ENCODE measurements at regions of chr1 and their contacts with region 1.

Region 1: DNA sequence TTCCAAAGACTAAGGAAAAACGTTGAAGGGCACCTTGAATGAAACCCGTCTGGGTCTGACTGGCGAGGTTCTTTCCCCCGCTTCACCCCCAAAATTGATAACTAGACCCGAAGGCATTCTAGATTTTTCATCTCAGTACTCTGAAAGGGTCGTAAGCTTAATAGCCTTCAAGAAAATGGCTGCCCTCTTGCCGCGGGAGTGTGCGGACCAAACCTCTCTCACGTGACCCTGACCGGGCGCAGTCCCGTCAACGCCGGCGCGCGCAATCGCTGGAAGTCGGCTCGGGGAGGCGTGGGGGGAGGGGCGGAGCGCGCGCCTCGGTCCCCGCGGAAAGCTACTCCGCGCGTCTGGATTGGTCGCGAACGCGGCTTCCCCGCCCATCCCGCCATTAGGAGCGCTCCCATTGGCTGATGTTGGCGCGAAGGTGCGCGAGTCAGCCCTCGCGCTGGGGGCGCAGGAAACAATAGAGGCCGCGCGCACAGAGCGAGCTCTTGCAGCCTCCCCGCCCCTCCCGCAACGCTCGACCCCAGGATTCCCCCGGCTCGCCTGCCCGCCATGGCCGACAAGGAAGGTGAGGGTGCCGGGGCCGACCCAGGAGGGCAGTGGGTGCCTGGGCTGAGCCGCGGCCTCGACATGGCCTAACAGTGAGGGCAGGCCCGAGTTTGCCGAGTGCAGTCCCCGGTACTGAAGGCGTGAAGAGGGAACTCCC is at the start of gene RBBP4:
- DNase-seq: peak; percentile 99
- ATAC-seq: peak; percentile 89
- H3K4me3 Mint-ChIP-seq: peak within 1 kb of the TSS; percentile 90
- H3K27ac Mint-ChIP-seq: peak within 1 kb of the TSS; percentile 99
- H3K4me1 Mint-ChIP-seq: peaks cover 48% of the 10 kb centered on the region
- H3K27me3 Mint-ChIP-seq: no peaks in the 10 kb centered on the region
- total RNA-seq, gene RBBP4: 323 to 331 TPM

Region 2: GRCh38 chr1:32107742-32108661 is 542.9 kb before region 1 on chr1 and contains the start of gene KPNA6:
- CTCF ChIA-PET with region 1: no interaction called
- POLR2A ChIA-PET with region 1: interaction called, 3 read pairs
- intact Hi-C with region 1: loop called in 1 of 2 experiments (anchors 1 kb)
- DNase-seq: peak; percentile 94
- ATAC-seq: peak; percentile 77
- H3K4me3 Mint-ChIP-seq: peak within 1 kb of the TSS; percentile 88
- H3K27ac Mint-ChIP-seq: peak within 1 kb of the TSS; percentile 96
- H3K4me1 Mint-ChIP-seq: peaks cover 39% of the 10 kb centered on the region
- H3K27me3 Mint-ChIP-seq: no peaks in the 10 kb centered on the region
- total RNA-seq, gene KPNA6: 70.0 to 78.3 TPM

Region 3: GRCh38 chr1:32351399-32352238 is 299.3 kb before region 1 on chr1:
- CTCF ChIA-PET with region 1: no interaction called
- POLR2A ChIA-PET with region 1: no interaction called
- intact Hi-C with region 1: loop called in 1 of 2 experiments (anchors 1 kb)
- DNase-seq: peak; percentile 96
- ATAC-seq: peak; percentile 96
- H3K4me3 Mint-ChIP-seq: peak overlapping the region; percentile 73
- H3K27ac Mint-ChIP-seq: peak overlapping the region; percentile 82
- H3K4me1 Mint-ChIP-seq: peaks cover 20% of the 10 kb centered on the region
- H3K27me3 Mint-ChIP-seq: no peaks in the 10 kb centered on the region

Region 4: DNA sequence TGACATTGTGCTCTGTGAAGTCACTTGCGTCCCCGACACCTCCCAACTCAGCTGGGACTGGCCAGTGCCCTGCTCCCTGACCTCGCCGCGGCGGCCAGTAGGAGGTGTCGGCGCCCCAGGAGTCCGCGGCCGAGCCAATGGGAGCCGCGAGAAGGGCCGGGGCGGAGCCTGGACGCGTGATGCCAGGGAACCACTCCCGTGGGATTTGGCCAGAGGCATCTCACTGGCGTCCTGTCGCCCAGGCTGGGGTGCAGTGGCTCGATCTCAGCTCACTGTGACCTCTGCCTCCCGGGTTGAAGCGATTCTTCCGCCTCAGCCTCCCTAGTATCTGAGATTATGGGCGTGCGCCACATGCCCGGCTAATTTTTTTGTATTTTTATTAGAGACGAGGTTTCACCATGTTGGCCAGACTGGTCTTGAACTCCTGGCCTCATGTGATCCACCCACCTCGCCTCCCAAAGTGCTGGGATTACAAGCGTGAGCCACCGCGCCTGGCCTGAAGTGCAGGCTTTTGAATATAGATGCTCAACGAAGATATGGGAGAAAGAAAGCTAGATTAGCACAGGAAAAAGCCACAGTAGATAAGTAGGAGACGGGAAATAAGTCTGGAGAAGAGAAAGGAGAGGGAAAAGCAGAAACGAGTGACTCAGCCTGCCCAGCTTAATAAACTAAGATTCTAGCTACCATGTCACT is 38.6 kb before region 1 on chr1:
- CTCF ChIA-PET with region 1: no interaction called
- POLR2A ChIA-PET with region 1: interaction called, 6 read pairs
- intact Hi-C with region 1: loop called in 1 of 2 experiments (anchors 1 kb)
- DNase-seq: peak; percentile 75
- ATAC-seq: peak; percentile 99
- H3K4me3 Mint-ChIP-seq: peak overlapping the region; percentile 57
- H3K27ac Mint-ChIP-seq: no peak overlapping the region
- H3K4me1 Mint-ChIP-seq: peaks cover 7% of the 10 kb centered on the region
- H3K27me3 Mint-ChIP-seq: no peaks in the 10 kb centered on the region

Region 5: GRCh38 chr1:32933742-32934322 is 282.9 kb after region 1 on chr1:
- CTCF ChIA-PET with region 1: no interaction called
- POLR2A ChIA-PET with region 1: no interaction called
- intact Hi-C with region 1: no loop called
- DNase-seq: no peak
- ATAC-seq: no peak
- H3K4me3 Mint-ChIP-seq: no peak overlapping the region
- H3K27ac Mint-ChIP-seq: no peak overlapping the region
- H3K4me1 Mint-ChIP-seq: peaks cover 12% of the 10 kb centered on the region
- H3K27me3 Mint-ChIP-seq: no peaks in the 10 kb centered on the region

Region 6: DNA sequence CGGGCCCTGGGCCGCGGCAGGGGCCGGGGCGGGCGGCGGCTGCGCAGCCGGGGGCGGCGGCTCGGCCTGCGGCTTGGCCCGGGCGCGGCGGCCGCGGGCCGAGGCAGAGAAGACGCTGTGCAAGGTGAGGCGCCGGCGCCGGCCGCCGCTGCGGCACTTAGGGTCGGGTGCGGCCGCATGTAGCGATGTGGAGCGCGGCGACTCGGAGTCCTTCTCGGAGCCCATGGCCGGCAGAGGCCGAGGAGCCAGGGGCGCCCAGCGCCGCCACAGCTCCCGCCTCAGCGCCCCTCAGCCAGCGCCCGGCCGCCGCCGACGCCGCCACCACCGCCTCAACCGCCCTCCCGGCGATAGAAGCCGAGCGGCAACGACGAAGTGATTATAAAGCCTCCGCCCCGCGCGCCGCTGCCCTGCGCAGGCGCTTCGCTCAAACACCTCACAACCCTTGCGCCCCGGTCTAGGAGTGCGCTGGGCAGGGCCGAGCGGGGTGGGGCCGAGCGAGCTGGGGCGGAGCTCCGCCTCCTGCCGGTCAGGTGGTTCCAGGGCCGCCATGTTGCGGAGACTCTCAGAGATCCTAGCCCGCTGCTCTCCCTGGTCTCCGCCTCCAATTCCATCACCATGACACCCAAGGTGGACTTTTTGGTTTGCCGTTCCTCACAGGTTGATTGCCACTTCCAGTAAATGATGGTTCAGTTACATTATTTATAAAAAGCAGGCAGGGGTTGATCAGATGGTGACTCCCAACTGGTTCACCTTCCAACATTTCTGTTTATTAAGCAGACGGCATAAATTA is 313.8 kb after region 1 on chr1 and contains the start of gene RNF19B:
- CTCF ChIA-PET with region 1: no interaction called
- POLR2A ChIA-PET with region 1: no interaction called
- intact Hi-C with region 1: loop called in 1 of 2 experiments (anchors 1 kb)
- DNase-seq: peak; percentile 98
- ATAC-seq: peak; percentile 96
- H3K4me3 Mint-ChIP-seq: peak within 1 kb of the TSS; percentile 77
- H3K27ac Mint-ChIP-seq: peak within 1 kb of the TSS; percentile 84
- H3K4me1 Mint-ChIP-seq: peaks cover 59% of the 10 kb centered on the region
- H3K27me3 Mint-ChIP-seq: peaks cover 5% of the 10 kb centered on the region
- total RNA-seq, gene RNF19B: 22.5 to 23.9 TPM

Region 7: DNA sequence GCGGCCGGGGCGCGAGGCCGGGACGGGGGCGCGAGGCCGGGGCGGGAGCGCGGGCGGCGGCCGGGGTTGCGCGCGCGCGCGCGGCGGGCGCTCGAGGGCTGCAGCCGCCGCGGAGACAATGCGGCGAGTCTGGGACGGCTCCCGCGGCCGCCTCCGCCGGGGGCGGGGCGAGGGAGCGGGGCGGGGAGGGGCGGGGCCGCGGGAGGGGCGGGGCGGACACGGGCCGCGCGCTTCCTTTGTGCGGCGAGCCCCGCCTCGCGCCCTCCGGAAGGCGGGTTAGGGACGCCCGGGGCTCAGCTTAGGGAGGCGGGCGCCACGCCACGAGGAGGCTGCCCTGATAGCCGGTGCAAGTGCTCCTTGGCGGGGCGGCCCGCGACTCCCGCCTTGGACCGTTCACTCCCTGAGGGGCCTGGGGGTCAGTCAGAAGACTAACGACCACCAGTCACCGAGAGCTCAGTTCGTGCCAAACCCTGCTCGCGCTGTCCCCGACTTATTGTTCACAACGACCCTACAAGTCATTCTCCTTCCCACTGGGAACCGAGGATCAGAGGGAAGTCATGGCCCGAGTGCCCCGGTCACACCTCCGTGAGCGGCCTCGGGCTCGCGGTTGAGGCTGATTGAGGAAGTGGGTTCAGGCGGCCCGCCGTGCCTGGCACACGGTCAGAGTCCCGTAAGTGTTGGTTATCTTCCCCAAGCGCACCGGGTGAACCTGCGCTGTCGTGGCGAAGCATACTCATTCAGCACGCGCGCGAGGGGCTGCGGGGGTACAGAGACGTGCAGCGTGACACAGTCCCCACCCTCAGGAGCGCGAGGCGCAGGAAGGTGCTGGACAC is 699.1 kb after region 1 on chr1:
- CTCF ChIA-PET with region 1: no interaction called
- POLR2A ChIA-PET with region 1: no interaction called
- intact Hi-C with region 1: loop called in 1 of 2 experiments (anchors 1 kb)
- DNase-seq: peak; percentile 87
- ATAC-seq: peak; percentile 87
- H3K4me3 Mint-ChIP-seq: peak overlapping the region; percentile 89
- H3K27ac Mint-ChIP-seq: peak overlapping the region; percentile 93
- H3K4me1 Mint-ChIP-seq: peaks cover 43% of the 10 kb centered on the region
- H3K27me3 Mint-ChIP-seq: no peaks in the 10 kb centered on the region